Mammary epithelial cell (primary cell): ENCODE measurements at regions of chr7 and their contacts with region 1.

Region 1: GRCh38 chr7:116180302-116180701 is 30.0 kb upstream of the TES start:
- DNase-seq: peak; percentile 52
- H3K4me3 ChIP-seq: no peak overlapping the region
- H3K27ac ChIP-seq: no peak overlapping the region
- H3K4me1 ChIP-seq: peaks cover 26% of the 10 kb centered on the region
- H3K27me3 ChIP-seq: no peaks in the 10 kb centered on the region
- CTCF ChIP-seq: peak; percentile 79 to 86

Region 2: DNA sequence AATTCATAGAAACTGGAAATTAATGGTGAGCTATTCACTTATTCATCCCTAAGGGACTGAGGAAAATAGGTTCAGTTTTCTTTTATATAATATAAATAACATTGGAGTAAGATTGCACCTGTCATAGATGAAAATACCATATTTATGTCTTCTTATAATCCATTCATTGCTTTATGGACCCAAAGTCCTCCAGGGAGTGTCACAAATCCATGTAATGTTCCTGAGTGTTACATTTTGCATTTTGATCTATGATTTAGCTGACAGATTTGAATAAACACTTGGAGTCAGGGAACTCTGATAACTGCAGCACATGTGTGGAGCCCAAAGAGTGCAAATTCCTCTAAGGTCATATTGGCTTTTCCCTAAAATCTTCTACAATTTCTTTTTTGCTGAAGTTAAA is 774.1 kb before region 1 on chr7:
- CTCF ChIA-PET with region 1: no interaction called
- dilution Hi-C with region 1: no loop called
- in situ Hi-C with region 1: no loop called
- intact Hi-C with region 1: no loop called
- DNase-seq: no peak
- H3K4me3 ChIP-seq: no peak overlapping the region
- H3K27ac ChIP-seq: no peak overlapping the region
- H3K4me1 ChIP-seq: no peaks in the 10 kb centered on the region
- H3K27me3 ChIP-seq: no peaks in the 10 kb centered on the region
- CTCF ChIP-seq: no peak

Region 3: GRCh38 chr7:116138202-116138801 is 42.0 kb before region 1 on chr7:
- CTCF ChIA-PET with region 1: interaction called, 5 read pairs
- dilution Hi-C with region 1: no loop called
- in situ Hi-C with region 1: no loop called
- intact Hi-C with region 1: loop called (anchors 2 kb)
- DNase-seq: peak; percentile 69
- H3K4me3 ChIP-seq: no peak overlapping the region
- H3K27ac ChIP-seq: peak overlapping the region; percentile 61
- H3K4me1 ChIP-seq: peaks cover 21% of the 10 kb centered on the region
- H3K27me3 ChIP-seq: no peaks in the 10 kb centered on the region
- CTCF ChIP-seq: peak; percentile 82 to 85

Region 4: GRCh38 chr7:116211006-116211912 is 31.0 kb after region 1 on chr7:
- CTCF ChIA-PET with region 1: no interaction called
- dilution Hi-C with region 1: no loop called
- in situ Hi-C with region 1: no loop called
- intact Hi-C with region 1: loop called (anchors 1 kb)
- DNase-seq: peak; percentile 91
- H3K4me3 ChIP-seq: peak overlapping the region; percentile 85 to 98 (median 91)
- H3K27ac ChIP-seq: peak overlapping the region; percentile 99
- H3K4me1 ChIP-seq: peaks cover 36% of the 10 kb centered on the region
- H3K27me3 ChIP-seq: no peaks in the 10 kb centered on the region
- CTCF ChIP-seq: no peak

Region 5: DNA sequence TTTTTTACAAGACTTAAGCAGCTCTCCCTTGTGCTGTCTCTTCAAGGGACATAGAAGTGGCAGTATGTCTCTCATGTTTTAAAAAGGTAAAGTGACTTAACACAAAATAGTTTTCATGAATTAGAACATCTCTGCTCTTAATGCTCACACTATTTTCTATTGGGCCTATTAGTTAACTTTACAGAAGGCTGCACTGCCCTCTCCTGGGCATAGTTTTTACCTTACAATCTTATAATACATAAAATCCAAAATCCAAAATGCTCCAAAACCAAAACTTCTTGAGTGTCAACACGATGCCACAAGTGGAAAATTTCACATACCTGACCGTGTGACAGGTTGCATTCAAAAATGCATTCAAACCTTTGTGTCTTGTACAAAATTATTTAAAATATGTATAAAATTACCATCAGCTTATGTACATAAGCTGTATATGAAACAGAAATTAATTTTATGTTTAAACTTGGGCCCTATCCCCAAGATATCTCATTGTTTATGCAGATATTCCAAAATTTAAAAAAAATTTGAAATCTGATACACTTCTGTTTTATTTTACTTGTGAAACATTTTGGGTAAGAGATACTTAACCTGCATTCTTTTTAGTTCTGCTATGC is 55.8 kb after region 1 on chr7:
- CTCF ChIA-PET with region 1: interaction called, 10 read pairs
- dilution Hi-C with region 1: no loop called
- in situ Hi-C with region 1: loop called in 1 of 2 experiments (anchors 5 kb)
- intact Hi-C with region 1: loop called (anchors 1 kb)
- DNase-seq: no peak
- H3K4me3 ChIP-seq: no peak overlapping the region
- H3K27ac ChIP-seq: peak overlapping the region; percentile 7
- H3K4me1 ChIP-seq: peaks cover 28% of the 10 kb centered on the region
- H3K27me3 ChIP-seq: no peaks in the 10 kb centered on the region
- CTCF ChIP-seq: peak; percentile 45 to 49

Region 6: DNA sequence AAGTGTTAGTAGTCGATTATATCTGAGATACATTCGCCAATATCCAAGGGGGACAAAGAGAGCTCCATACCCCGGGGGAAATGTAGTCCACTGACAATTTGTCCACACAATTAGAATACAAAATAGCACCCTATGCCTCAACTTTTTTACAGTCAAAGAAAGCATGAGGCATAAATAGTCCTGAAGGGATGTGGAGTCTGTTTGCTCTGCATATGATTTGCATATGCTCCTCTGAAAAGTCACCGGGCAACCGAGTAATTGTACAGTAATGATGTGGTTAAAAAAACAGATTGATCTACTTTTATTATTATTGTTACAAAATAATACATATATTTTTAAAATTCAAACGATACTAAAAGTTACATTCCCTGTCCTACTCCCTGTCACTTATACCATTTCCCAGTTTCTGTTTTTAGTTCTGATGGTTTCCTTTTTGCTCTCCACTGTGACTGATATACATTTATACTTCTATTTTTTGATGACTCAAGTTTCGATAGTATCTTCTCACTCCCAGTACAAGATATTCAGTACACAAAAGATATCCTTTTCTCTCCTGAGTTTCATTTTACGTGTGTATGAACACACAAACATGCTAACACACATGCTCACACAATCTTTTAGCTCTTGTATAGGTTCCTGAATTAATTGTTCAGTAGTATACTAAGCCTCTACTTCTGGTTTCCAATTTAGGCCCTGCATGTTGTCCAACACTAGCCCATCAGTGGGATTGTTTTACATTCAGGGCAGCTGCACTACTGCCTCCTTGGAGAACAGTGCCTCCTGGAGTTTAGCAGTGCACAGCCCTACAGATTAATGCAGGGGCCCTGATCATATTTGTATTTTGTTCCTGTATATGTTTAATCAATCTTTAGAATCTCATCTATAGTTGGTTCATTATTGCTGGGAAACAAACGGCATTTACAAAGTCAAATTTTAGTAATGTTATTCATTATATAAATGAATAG is 160.9 kb after region 1 on chr7:
- CTCF ChIA-PET with region 1: no interaction called
- dilution Hi-C with region 1: no loop called
- in situ Hi-C with region 1: no loop called
- intact Hi-C with region 1: loop called (anchors 5 kb)
- DNase-seq: no peak
- H3K4me3 ChIP-seq: no peak overlapping the region
- H3K27ac ChIP-seq: no peak overlapping the region
- H3K4me1 ChIP-seq: peaks cover 14% of the 10 kb centered on the region
- H3K27me3 ChIP-seq: no peaks in the 10 kb centered on the region
- CTCF ChIP-seq: peak; percentile 28 to 57

Region 7: DNA sequence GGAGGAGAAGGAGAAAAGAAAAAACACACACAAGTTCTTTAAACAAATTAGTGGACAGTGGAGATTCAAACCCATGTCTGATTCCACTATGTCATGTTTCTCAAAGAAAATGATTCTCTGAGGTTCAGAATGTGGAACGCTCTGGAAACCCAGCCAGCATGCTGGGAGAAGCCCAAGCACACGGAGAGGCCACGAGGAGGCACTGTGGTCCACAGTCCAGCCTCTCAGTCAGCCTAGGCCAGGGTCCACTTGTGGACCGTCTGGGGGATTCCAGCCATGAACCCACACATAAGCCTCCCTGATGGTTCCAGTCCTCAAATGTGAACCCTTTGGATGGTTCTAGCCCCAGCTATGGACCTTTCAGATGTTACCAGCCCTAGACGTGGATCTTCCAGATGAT is 418.0 kb after region 1 on chr7:
- CTCF ChIA-PET with region 1: no interaction called
- dilution Hi-C with region 1: no loop called
- in situ Hi-C with region 1: no loop called
- intact Hi-C with region 1: no loop called
- DNase-seq: no peak
- H3K4me3 ChIP-seq: no peak overlapping the region
- H3K27ac ChIP-seq: no peak overlapping the region
- H3K4me1 ChIP-seq: no peaks in the 10 kb centered on the region
- H3K27me3 ChIP-seq: no peaks in the 10 kb centered on the region
- CTCF ChIP-seq: peak in 1 of 2 donors; percentile 25

Region 8: GRCh38 chr7:116616555-116617059 is 436.3 kb after region 1 on chr7:
- CTCF ChIA-PET with region 1: no interaction called
- dilution Hi-C with region 1: no loop called
- in situ Hi-C with region 1: no loop called
- intact Hi-C with region 1: no loop called
- DNase-seq: peak; percentile 79
- H3K4me3 ChIP-seq: no peak overlapping the region
- H3K27ac ChIP-seq: peak overlapping the region; percentile 2
- H3K4me1 ChIP-seq: peaks cover 15% of the 10 kb centered on the region
- H3K27me3 ChIP-seq: no peaks in the 10 kb centered on the region
- CTCF ChIP-seq: no peak